Caco-2 (cell line): ENCODE measurements at regions of chr4 and their contacts with region 1.

Region 1: GRCh38 chr4:52343595-52343994 is 292.5 kb downstream of the SPATA18 start:
- DNase-seq: no peak
- H3K4me3 ChIP-seq: no peak overlapping the region
- H3K4me3 Mint-ChIP-seq: no peak overlapping the region
- H3K27ac Mint-ChIP-seq: no peak overlapping the region
- H3K4me1 ChIP-seq: no peaks in the 10 kb centered on the region
- H3K4me1 Mint-ChIP-seq: no peaks in the 10 kb centered on the region
- H3K27me3 ChIP-seq: no peaks in the 10 kb centered on the region
- H3K27me3 Mint-ChIP-seq: peaks cover 2% of the 10 kb centered on the region
- CTCF ChIP-seq: no peak

Region 2: GRCh38 chr4:52143815-52144214 is 199.8 kb before region 1 on chr4:
- CTCF ChIA-PET with region 1: no interaction called
- POLR2A ChIA-PET with region 1: no interaction called
- intact Hi-C with region 1: no loop called
- DNase-seq: no peak
- H3K4me3 ChIP-seq: no peak overlapping the region
- H3K4me3 Mint-ChIP-seq: no peak overlapping the region
- H3K27ac Mint-ChIP-seq: no peak overlapping the region
- H3K4me1 ChIP-seq: no peaks in the 10 kb centered on the region
- H3K4me1 Mint-ChIP-seq: no peaks in the 10 kb centered on the region
- H3K27me3 ChIP-seq: no peaks in the 10 kb centered on the region
- H3K27me3 Mint-ChIP-seq: no peaks in the 10 kb centered on the region
- CTCF ChIP-seq: no peak

Region 3: DNA sequence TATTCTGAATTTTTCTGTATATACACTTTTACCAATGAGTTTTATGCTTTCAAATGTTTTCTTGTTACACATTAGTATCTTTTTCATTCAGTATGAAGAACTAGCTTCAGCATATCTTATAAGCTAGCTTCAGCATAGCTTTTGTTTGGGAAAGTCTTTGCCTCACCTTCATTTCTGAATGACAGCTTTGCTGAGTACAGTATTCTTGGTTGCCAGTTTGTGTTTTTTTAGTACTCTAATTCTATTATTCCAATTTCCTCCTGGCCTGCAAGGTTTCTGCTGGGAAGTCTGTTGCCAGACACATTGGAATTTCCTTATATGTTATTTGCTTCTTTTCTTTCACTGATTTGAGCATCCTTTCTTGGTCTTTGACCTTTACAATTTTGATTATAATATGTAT is 13.7 kb before region 1 on chr4:
- CTCF ChIA-PET with region 1: no interaction called
- POLR2A ChIA-PET with region 1: no interaction called
- intact Hi-C with region 1: loop called (anchors 1 kb)
- DNase-seq: no peak
- H3K4me3 ChIP-seq: no peak overlapping the region
- H3K4me3 Mint-ChIP-seq: no peak overlapping the region
- H3K27ac Mint-ChIP-seq: no peak overlapping the region
- H3K4me1 ChIP-seq: no peaks in the 10 kb centered on the region
- H3K4me1 Mint-ChIP-seq: no peaks in the 10 kb centered on the region
- H3K27me3 ChIP-seq: no peaks in the 10 kb centered on the region
- H3K27me3 Mint-ChIP-seq: no peaks in the 10 kb centered on the region
- CTCF ChIP-seq: no peak

Region 4: GRCh38 chr4:52588097-52588782 is 244.6 kb after region 1 on chr4:
- CTCF ChIA-PET with region 1: no interaction called
- POLR2A ChIA-PET with region 1: no interaction called
- intact Hi-C with region 1: no loop called
- DNase-seq: peak; percentile 51 to 60
- H3K4me3 ChIP-seq: no peak overlapping the region
- H3K4me3 Mint-ChIP-seq: no peak overlapping the region
- H3K27ac Mint-ChIP-seq: no peak overlapping the region
- H3K4me1 ChIP-seq: peaks cover 6% of the 10 kb centered on the region; the same call in 1 of the 2 replicates
- H3K4me1 Mint-ChIP-seq: peaks cover 15% of the 10 kb centered on the region
- H3K27me3 ChIP-seq: no peaks in the 10 kb centered on the region
- H3K27me3 Mint-ChIP-seq: no peaks in the 10 kb centered on the region
- CTCF ChIP-seq: peak; percentile 49 to 64